ENCODE measurements at regions of chr2 and their contacts with region 1.

Region 1: DNA sequence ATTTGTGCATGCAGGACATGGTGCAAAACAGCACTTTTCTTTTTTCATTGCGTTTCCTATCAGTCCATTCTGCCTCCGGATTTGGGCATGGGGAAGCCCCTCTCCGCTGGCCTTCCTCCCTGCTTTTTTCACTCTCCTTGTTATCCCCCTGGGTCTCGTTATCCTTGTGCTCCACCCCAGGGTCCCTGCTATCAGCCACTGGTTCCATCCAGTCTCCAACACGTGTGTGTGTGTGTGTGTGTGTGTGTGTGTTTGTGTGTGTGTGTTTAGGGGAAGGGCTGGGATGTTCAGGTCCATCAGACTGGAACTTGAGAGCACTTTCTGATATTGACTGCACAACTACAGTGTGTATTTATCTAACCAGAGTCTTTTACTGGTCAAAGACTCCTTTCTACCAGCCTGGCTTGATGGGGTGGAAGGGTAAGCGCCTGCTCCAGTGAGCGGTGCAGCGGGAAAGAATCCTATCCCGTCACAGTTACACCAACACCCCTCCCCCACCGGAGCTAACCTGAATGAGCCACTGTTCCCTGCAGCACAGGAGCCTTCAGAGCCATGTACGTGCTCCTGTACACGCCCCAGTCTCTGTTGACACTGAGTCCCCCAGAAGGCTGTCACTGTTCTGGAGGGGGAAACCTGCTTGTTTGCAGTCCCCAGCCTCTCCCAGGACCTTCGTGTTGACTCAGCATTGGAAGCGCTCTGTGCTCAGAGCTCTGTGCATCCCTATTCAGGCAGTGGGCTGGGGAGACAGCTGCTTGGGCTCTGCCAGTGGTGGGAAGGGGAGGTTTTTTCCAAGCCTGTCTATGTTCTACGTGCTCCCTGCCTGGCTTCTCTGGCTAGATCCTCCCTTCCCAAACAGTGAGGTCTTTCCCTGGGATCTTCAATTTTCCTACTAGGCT is 4.6 kb downstream of the INHA start:
- DNase-seq: peak; percentile 100
- ATAC-seq: peak; percentile 94
- H3K4me3 ChIP-seq: peak overlapping the region in 2 of 3 experiments; percentile 23 to 45; a peak in 3 of 6 replicates
- H3K27ac ChIP-seq: peak overlapping the region; percentile 86
- H3K4me1 ChIP-seq: peaks cover 81% of the 10 kb centered on the region
- H3K27me3 ChIP-seq: no peaks in the 10 kb centered on the region
- CTCF ChIP-seq: peak; percentile 32; the same call in 1 of the 2 replicates
- EP300 ChIP-seq: peak; percentile 61 to 96; a peak in 3 of 4 replicates
- POLR2A ChIP-seq: no peak; a peak in 1 of 4 replicates
- RAD21 ChIP-seq: peak; percentile 55; the same call in 1 of the 2 replicates

Region 2: GRCh38 chr2:219126551-219126950 is 450.2 kb before region 1 on chr2:
- CTCF ChIA-PET with region 1: no interaction called
- POLR2A ChIA-PET with region 1: no interaction called
- in situ Hi-C with region 1: no loop called
- intact Hi-C with region 1: no loop called
- DNase-seq: peak; percentile 78
- ATAC-seq: peak; percentile 89
- H3K4me3 ChIP-seq: no peak overlapping the region
- H3K27ac ChIP-seq: no peak overlapping the region
- H3K4me1 ChIP-seq: peaks cover 67% of the 10 kb centered on the region
- H3K27me3 ChIP-seq: no peaks in the 10 kb centered on the region
- CTCF ChIP-seq: no peak
- EP300 ChIP-seq: peak in 1 of 2 experiments; percentile 25; a peak in 1 of 4 replicates
- POLR2A ChIP-seq: no peak
- RAD21 ChIP-seq: no peak

Region 3: DNA sequence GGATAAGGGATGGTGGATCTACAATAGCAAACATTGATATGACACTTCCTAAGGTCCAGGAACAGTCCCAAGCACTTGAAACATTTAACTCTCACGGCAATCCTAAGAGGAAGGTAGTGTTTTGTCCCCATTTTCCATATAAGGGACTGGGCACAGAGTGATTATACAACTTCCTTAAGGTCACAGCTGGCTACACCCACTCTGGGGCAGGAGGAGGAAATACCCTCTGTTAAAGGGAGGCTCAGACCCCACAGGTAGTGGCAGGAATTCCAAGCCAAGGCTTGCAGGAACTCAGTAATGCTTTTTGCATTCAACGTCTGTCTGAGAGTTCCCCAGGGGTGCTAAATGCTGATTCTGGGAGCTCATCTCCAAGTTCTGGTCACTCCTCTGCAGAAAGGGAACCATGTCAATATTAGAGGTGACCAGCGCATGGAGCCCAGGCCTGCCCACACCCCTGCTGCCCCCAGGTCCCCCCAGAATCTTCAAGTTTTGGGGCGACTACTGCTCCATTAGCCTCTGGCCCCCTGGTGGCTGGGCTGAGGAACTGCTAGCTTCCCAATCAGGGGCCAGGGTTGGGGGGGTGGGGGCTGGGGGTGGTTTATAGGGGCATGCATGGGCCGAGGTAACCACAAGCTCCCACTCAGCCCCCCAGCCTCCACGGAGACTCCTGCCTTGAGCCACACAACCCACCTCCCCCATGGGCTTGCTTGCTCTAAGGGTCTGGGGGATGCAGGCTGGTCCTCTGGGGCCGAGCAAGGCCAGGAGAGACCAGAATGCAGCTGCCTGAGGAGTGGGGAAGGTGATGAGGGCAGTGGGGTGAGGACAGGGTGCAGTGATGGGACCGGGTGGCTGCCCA is 16.5 kb before region 1 on chr2:
- CTCF ChIA-PET with region 1: no interaction called
- POLR2A ChIA-PET with region 1: interaction called, 45 read pairs
- in situ Hi-C with region 1: no loop called
- intact Hi-C with region 1: no loop called
- DNase-seq: no peak
- ATAC-seq: peak; percentile 18
- H3K4me3 ChIP-seq: no peak overlapping the region
- H3K27ac ChIP-seq: no peak overlapping the region
- H3K4me1 ChIP-seq: peaks cover 35% of the 10 kb centered on the region
- H3K27me3 ChIP-seq: no peaks in the 10 kb centered on the region
- CTCF ChIP-seq: peak; percentile 62
- EP300 ChIP-seq: no peak
- POLR2A ChIP-seq: no peak
- RAD21 ChIP-seq: no peak

Region 4: GRCh38 chr2:219627103-219628100 is 50.7 kb after region 1 on chr2 and contains the start of gene SLC4A3:
- CTCF ChIA-PET with region 1: no interaction called
- POLR2A ChIA-PET with region 1: interaction called, 3 read pairs
- in situ Hi-C with region 1: no loop called
- intact Hi-C with region 1: loop called (anchors 5 kb)
- DNase-seq: no peak
- ATAC-seq: peak; percentile 63
- H3K4me3 ChIP-seq: peak within 1 kb of the TSS; percentile 52 to 72 (median 65); a peak in 5 of 6 replicates
- H3K27ac ChIP-seq: no peak within 1 kb of the TSS
- H3K4me1 ChIP-seq: peaks cover 44% of the 10 kb centered on the region
- H3K27me3 ChIP-seq: peaks cover 26 to 87% of the 10 kb centered on the region in 2 experiments
- CTCF ChIP-seq: peak; percentile 46; the same call in 1 of the 2 replicates
- EP300 ChIP-seq: no peak
- POLR2A ChIP-seq: no peak
- RAD21 ChIP-seq: no peak
- total RNA-seq, gene SLC4A3: 0.10 and 0.18 TPM in 2 replicates